OCI-LY7 (cell line): ENCODE measurements at regions of chr17 and their contacts with region 1.

Region 1: DNA sequence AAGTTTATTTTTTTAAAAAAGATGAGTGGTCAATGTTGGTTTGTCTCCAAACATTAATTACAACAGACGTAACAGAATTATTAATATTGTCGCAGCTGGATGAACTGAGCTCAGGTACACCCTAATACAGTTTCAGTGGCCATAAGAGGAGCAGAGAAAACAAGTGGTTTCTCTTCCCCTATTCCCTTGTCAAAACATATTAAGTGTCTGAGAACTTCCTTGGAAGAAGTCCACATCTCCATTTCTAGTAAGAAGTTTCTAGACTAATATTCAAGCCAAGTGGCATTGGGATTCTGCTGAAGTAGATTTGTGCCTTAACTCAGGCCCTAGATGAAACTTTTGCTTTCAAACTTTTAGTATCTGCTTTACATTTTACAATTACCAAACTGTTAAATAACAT is 47.7 kb downstream of the GNA13 start:
- DNase-seq: no peak
- H3K4me3 ChIP-seq: no peak overlapping the region
- H3K27ac ChIP-seq: peak overlapping the region; percentile 37
- H3K4me1 ChIP-seq: peaks cover 85% of the 10 kb centered on the region
- CTCF ChIP-seq: no peak

Region 2: DNA sequence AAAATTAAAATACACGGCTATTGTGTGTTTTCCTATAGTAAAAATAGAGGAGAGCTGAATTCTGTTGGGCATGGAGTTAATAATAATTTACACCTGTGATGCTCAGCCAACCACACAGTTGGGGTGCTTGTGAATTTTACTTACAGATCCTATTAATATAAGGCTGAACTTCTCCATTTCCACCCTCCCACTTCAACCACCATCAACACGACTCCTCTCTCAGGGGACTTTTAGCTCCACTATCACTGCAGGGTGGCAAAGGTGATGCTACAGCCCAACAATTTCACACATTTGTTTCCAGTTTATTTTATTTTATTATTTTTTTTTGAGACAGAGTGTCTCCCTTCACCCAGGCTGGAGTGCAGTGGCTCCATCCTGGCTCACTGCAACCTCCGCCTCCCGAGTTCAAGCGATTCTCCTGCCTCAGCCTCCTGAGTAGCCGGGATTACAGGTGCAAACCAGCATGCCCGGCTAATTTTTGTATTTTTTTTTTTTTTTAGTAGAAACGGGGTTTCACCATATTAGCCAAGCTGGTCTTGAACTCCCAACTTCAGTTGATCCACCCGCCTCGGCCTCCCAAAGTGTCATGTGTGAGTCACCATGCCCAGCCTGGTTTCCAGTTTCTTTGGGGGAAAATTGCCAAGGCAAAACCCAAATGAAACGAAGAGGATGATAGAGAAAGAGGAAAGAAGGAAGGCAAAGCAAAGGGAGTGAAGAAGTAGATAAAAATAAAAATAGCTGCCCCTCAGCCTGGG is 10.3 kb before region 1 on chr17:
- CTCF ChIA-PET with region 1: no interaction called
- POLR2A ChIA-PET with region 1: interaction called, 11 read pairs
- intact Hi-C with region 1: no loop called
- DNase-seq: peak; percentile 39
- H3K4me3 ChIP-seq: peak overlapping the region; percentile 1
- H3K27ac ChIP-seq: peak overlapping the region; percentile 59
- H3K4me1 ChIP-seq: peaks cover 90% of the 10 kb centered on the region
- CTCF ChIP-seq: no peak

Region 3: DNA sequence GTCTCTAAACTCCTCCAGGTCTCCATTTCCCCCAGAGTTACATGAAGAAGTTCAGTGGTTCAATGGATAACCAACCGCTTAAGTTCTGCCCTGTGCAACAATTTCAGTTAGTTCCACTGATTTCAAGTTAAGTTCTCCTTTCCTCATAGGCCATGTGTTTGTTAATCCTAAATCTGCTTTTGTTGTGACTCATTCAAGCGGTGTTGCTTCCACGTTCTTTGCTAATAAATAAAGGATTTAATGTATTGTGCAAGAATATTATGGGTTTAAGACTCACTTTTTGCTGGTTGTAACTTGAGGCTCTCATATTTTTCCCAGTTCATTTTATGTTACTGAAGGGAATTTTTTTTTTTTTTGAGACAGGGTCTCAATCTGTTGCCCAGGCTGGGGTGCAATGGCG is 11.4 kb after region 1 on chr17:
- CTCF ChIA-PET with region 1: no interaction called
- POLR2A ChIA-PET with region 1: interaction called, 19 read pairs
- intact Hi-C with region 1: no loop called
- DNase-seq: no peak
- H3K4me3 ChIP-seq: no peak overlapping the region
- H3K27ac ChIP-seq: peak overlapping the region; percentile 45
- H3K4me1 ChIP-seq: peaks cover 72% of the 10 kb centered on the region
- CTCF ChIP-seq: no peak